ACHN (cell line): ENCODE measurements at regions of chr1 and their contacts with region 1.

Region 1: DNA sequence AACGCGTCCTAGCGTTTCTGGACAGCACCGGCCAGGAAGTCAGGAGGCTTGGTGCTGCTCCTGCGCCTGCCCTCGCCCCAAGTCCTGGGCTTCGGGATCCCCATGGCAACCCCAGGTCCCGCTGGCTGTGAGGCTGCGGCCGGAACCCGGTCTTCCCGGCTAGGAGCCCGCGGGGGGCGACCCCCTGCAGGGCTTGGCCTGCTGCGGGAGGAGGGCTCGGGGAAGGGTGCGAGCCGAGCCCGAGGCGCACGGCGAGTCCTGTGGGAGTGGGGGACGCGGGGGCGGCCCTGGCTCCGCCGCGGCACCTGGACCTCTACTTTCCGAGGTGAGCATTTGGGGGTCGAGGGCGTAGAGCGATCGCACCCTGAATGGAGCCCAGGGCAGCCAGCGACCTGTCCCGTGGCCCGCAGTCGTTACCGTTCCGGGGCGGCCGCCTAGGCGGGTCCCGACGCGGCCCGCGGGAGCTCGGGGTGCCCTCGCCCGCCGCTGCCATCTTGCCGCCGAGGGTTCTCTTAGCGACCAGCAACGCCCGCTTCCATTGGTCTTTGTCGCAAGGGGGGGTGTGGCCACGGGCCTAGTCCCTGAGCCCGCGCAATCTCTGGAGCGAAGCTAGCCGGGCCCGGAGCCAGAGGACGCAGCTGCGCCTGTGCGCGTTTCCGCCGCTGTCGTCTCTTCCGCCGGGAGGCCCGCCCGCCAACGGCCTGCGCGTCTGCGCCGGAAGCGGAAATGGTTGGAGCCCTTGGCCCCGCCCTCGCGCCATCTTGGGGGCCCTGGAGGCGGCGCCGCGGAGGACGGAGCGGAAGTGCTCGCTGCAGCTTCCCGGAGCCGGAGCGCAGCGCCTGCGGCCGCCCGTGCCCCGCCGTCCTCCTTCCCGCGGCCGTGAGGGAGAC is at the starts of genes MORN1 and RER1:
- DNase-seq: peak; percentile 98

Region 2: DNA sequence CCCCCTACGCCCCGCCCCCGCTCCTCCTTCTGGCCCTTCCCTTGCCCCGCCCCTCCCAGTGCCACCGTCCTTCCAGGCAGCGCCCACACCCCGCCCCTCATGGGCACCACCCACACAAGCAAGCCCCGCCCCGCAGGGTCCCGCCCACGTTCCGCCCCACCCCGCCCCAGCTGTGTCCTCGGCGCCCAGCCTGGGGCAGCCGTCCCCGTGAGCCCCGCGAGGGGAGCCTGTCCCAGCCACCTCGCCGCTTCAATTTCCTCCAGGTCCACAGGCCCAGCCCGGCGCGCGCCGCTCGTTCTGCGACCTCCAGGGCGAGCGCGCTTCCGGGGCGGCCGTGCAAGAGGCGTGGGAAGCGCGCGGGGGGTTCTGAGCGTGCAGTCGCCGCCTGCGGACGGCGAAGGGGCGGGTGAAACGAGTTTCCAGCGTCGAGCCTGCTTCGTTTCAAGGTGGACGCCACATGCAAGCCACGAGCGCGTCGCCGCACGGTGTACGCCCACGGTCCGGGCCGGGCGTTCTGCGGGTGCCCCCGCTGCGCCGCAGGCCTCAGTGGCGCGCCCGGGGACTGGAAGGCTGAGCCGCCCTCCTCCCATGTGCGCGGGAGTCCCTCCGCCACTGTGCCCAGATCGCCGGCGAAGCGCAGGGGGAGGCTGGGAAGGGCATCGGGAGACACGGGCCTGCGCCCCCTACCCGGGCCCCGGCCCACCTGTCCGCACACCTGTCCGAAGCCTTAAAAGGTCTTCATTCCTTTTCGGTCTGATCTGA is 185.9 kb before region 1 on chr1:
- in situ Hi-C with region 1: loop called (anchors 25 kb)
- DNase-seq: peak; percentile 81

Region 3: DNA sequence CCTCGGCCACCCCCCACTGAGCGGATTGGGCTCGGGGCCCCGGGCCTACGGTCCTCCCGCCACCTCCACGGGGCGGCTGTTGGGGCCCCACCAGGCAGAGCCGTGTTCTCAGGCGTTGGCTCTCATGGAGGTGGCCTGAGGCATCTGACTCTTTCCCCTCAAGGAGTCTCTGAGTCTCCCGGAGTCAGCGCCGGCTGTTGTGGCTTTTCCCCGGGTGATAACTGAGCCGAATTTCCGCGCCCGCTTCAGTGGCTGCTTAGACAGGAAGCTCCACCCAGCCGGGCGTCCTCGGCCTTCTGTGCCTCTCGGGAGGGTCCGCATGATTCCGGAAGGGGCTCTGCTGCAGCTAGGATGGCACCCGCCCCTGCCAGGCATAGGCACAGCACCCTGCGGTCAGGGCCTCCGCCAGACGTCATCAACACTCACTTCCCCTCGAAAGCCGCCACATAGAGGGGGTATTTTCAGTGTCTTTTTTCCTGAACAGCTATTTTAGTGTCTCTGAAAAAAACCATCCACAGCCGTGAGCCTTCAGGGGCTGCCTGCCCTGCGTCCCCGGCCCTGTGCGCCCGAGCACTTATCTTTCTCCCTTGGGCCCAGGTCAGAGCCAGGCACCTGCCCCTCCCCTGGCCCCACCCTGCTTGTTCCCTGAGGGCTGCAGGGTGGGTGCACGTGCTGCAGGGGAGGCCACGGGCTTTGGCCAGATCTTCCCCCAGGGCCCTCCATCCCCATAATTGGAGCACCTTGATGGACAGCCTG is 90.3 kb before region 1 on chr1:
- in situ Hi-C with region 1: no loop called
- DNase-seq: no peak

Region 4: DNA sequence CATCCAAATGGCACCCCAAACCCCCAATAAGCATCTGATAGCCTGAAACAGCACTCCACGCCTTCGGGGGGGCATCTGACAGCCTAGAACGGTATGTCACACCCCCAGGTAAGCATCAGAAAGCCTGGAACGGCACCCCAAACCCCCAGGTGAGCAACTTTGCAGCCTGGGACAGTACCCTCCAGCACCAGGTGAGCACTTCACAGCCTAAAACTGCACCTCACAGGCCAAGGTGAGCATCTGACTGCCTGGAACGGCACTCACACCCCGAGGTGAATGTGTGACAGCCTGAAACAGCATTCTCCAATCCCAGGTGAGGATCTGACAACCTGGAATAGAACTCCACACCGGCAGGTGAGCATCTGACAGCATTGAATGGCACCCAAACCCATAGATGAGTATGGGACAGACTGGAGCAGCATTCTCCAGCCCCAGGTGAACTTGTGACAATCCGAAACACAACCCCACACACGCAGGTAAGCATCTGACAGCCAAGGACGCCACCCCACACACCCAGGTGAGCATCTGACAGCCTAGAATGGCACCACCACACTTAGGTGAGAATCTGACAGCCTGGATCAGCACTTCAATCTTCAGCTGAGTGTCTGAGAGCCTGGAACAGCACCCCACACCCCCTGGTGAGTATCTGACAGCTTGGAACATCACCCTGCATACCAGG is 259.8 kb after region 1 on chr1:
- in situ Hi-C with region 1: no loop called
- DNase-seq: no peak